Naive thymus-derived CD4-positive, alpha-beta T cell (primary cell): ENCODE measurements at regions of chr7 and their contacts with region 1.

Region 1: DNA sequence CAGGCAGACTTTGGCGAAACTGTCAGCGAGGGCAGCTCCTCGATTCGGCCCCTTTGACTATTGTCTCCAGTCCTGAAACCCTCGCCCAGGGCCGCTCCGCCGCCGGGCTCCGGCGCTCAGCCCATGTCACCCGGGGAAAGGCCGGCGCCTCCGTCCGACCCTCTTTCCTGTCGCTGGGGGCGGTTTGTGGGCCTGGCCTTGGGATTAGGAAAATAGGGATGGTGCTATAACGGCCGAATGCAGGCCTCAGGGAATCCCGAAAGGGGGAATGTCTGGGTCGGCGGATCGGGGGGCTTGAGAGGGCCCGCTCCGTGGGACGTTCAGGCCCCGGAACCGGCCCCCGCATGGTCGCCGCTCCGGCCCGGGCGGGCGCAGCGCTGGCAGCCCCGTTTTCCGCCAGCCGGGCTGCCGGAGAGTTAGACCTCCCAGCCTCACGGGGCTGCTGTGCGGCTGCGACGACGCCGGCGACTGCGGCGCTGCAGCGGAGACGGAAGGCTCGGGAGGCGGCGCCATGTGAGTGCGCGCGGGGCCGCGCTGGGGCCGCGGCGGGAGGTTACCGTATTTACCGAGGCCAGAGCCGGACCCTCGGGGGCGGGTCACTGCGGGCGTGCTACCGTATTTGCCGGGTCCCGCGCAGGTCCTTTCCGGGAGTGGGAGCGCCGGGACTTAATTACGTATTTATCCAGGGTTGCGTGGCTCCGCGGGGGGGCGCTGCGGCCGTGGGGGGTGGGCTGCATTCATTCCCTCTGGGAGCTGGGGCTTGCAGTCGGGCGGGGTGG is 25.9 kb downstream of the ZNF775 start:
- DNase-seq: peak; percentile 65 to 81 (median 74)
- ATAC-seq: peak; percentile 87
- H3K4me3 ChIP-seq: peak overlapping the region; percentile 83
- H3K4me3 Mint-ChIP-seq: peak overlapping the region; percentile 91 to 100 (median 96)
- H3K27ac ChIP-seq: peak overlapping the region; percentile 91
- H3K27ac Mint-ChIP-seq: peak overlapping the region; percentile 92 to 99 (median 96)
- H3K4me1 ChIP-seq: peaks cover 14 to 21% of the 10 kb centered on the region in 2 donors
- H3K4me1 Mint-ChIP-seq: peaks cover 30 to 42% (median 37%) of the 10 kb centered on the region in 7 donors
- H3K27me3 ChIP-seq: no peaks in the 10 kb centered on the region
- H3K27me3 Mint-ChIP-seq: no peaks in the 10 kb centered on the region

Region 2: GRCh38 chr7:149635561-149636329 is 769.2 kb before region 1 on chr7:
- CTCF ChIA-PET with region 1: no interaction called
- POLR2A ChIA-PET with region 1: no interaction called
- intact Hi-C with region 1: no loop called
- DNase-seq: no peak
- ATAC-seq: no peak
- H3K4me3 ChIP-seq: no peak overlapping the region
- H3K4me3 Mint-ChIP-seq: no peak overlapping the region
- H3K27ac ChIP-seq: no peak overlapping the region
- H3K27ac Mint-ChIP-seq: no peak overlapping the region
- H3K4me1 ChIP-seq: no peaks in the 10 kb centered on the region
- H3K4me1 Mint-ChIP-seq: no peaks in the 10 kb centered on the region
- H3K27me3 ChIP-seq: no peaks in the 10 kb centered on the region
- H3K27me3 Mint-ChIP-seq: peaks cover 4 to 21% (median 9%) of the 10 kb centered on the region in 5 donors

Region 3: GRCh38 chr7:150356265-150356897 is 48.6 kb before region 1 on chr7:
- CTCF ChIA-PET with region 1: interaction called, 17 read pairs
- POLR2A ChIA-PET with region 1: interaction called, 50 read pairs
- intact Hi-C with region 1: loop called (anchors 1 kb)
- DNase-seq: peak in 7 of 9 donors; percentile 32 to 59 (median 53)
- ATAC-seq: peak; percentile 59
- H3K4me3 ChIP-seq: no peak overlapping the region
- H3K4me3 Mint-ChIP-seq: peak overlapping the region in 4 of 10 donors; percentile 12 to 32 (median 22)
- H3K27ac ChIP-seq: peak overlapping the region; percentile 51
- H3K27ac Mint-ChIP-seq: peak overlapping the region in 6 of 9 donors; percentile 32 to 77 (median 36)
- H3K4me1 ChIP-seq: peaks cover 6 to 28% of the 10 kb centered on the region in 2 donors
- H3K4me1 Mint-ChIP-seq: peaks cover 17 to 43% (median 41%) of the 10 kb centered on the region in 7 donors
- H3K27me3 ChIP-seq: no peaks in the 10 kb centered on the region
- H3K27me3 Mint-ChIP-seq: peaks cover 0 to 10% (median 0%) of the 10 kb centered on the region in 5 donors

Region 4: GRCh38 chr7:150378853-150379440 is 26.0 kb before region 1 on chr7 and contains the start of gene ZNF775:
- CTCF ChIA-PET with region 1: interaction called, 3 read pairs
- POLR2A ChIA-PET with region 1: interaction called, 10 read pairs
- intact Hi-C with region 1: loop called (anchors 1 kb)
- DNase-seq: peak; percentile 87 to 96 (median 90)
- ATAC-seq: peak; percentile 98
- H3K4me3 ChIP-seq: peak within 1 kb of the TSS; percentile 68
- H3K4me3 Mint-ChIP-seq: peak within 1 kb of the TSS; percentile 84 to 95 (median 90)
- H3K27ac ChIP-seq: peak within 1 kb of the TSS; percentile 91
- H3K27ac Mint-ChIP-seq: peak within 1 kb of the TSS; percentile 61 to 95 (median 86)
- H3K4me1 ChIP-seq: peaks cover 4 to 30% of the 10 kb centered on the region in 2 donors
- H3K4me1 Mint-ChIP-seq: peaks cover 32 to 57% (median 46%) of the 10 kb centered on the region in 7 donors
- H3K27me3 ChIP-seq: no peaks in the 10 kb centered on the region
- H3K27me3 Mint-ChIP-seq: no peaks in the 10 kb centered on the region
- total RNA-seq, gene ZNF775: 1.1 to 5.7 (median 4.3) TPM

Region 5: GRCh38 chr7:150420987-150421674 is 16.1 kb after region 1 on chr7:
- CTCF ChIA-PET with region 1: interaction called, 5 read pairs
- POLR2A ChIA-PET with region 1: interaction called, 6 read pairs
- intact Hi-C with region 1: loop called (anchors 1 kb)
- DNase-seq: peak; percentile 65 to 87 (median 81)
- ATAC-seq: peak; percentile 99
- H3K4me3 ChIP-seq: no peak overlapping the region
- H3K4me3 Mint-ChIP-seq: peak overlapping the region; percentile 16 to 75 (median 52)
- H3K27ac ChIP-seq: no peak overlapping the region
- H3K27ac Mint-ChIP-seq: peak overlapping the region in 7 of 9 donors; percentile 18 to 78 (median 45)
- H3K4me1 ChIP-seq: peaks cover 3 to 4% of the 10 kb centered on the region in 2 donors
- H3K4me1 Mint-ChIP-seq: peaks cover 5 to 17% (median 8%) of the 10 kb centered on the region in 7 donors
- H3K27me3 ChIP-seq: no peaks in the 10 kb centered on the region
- H3K27me3 Mint-ChIP-seq: peaks cover 0 to 6% (median 0%) of the 10 kb centered on the region in 5 donors

Region 6: GRCh38 chr7:151459726-151460473 is 1054.9 kb after region 1 on chr7:
- CTCF ChIA-PET with region 1: no interaction called
- POLR2A ChIA-PET with region 1: no interaction called
- intact Hi-C with region 1: no loop called
- DNase-seq: no peak
- ATAC-seq: no peak
- H3K4me3 ChIP-seq: no peak overlapping the region
- H3K4me3 Mint-ChIP-seq: no peak overlapping the region
- H3K27ac ChIP-seq: no peak overlapping the region
- H3K27ac Mint-ChIP-seq: no peak overlapping the region
- H3K4me1 ChIP-seq: no peaks in the 10 kb centered on the region
- H3K4me1 Mint-ChIP-seq: peaks cover 0 to 10% (median 0%) of the 10 kb centered on the region in 7 donors
- H3K27me3 ChIP-seq: no peaks in the 10 kb centered on the region
- H3K27me3 Mint-ChIP-seq: peaks cover 0 to 11% (median 7%) of the 10 kb centered on the region in 5 donors

Region 7: GRCh38 chr7:152046531-152046930 is 1641.5 kb after region 1 on chr7:
- CTCF ChIA-PET with region 1: no interaction called
- POLR2A ChIA-PET with region 1: no interaction called
- intact Hi-C with region 1: no loop called
- DNase-seq: no peak
- ATAC-seq: no peak
- H3K4me3 ChIP-seq: no peak overlapping the region
- H3K4me3 Mint-ChIP-seq: peak overlapping the region in 1 of 10 donors; percentile 24
- H3K27ac ChIP-seq: no peak overlapping the region
- H3K27ac Mint-ChIP-seq: no peak overlapping the region
- H3K4me1 ChIP-seq: no peaks in the 10 kb centered on the region
- H3K4me1 Mint-ChIP-seq: peaks cover 8 to 25% (median 19%) of the 10 kb centered on the region in 7 donors
- H3K27me3 ChIP-seq: no peaks in the 10 kb centered on the region
- H3K27me3 Mint-ChIP-seq: no peaks in the 10 kb centered on the region

Region 8: GRCh38 chr7:152315845-152316244 is 1910.9 kb after region 1 on chr7:
- CTCF ChIA-PET with region 1: no interaction called
- POLR2A ChIA-PET with region 1: no interaction called
- intact Hi-C with region 1: no loop called
- DNase-seq: no peak
- ATAC-seq: no peak
- H3K4me3 ChIP-seq: no peak overlapping the region
- H3K4me3 Mint-ChIP-seq: peak overlapping the region in 2 of 10 donors; percentile 8 to 24
- H3K27ac ChIP-seq: no peak overlapping the region
- H3K27ac Mint-ChIP-seq: peak overlapping the region in 2 of 9 donors; percentile 35 to 48
- H3K4me1 ChIP-seq: peaks cover 7 to 8% of the 10 kb centered on the region in 2 donors
- H3K4me1 Mint-ChIP-seq: peaks cover 11 to 64% (median 51%) of the 10 kb centered on the region in 7 donors
- H3K27me3 ChIP-seq: no peaks in the 10 kb centered on the region
- H3K27me3 Mint-ChIP-seq: no peaks in the 10 kb centered on the region